ENCODE measurements at regions of chr12 and their contacts with region 1.

Region 1: DNA sequence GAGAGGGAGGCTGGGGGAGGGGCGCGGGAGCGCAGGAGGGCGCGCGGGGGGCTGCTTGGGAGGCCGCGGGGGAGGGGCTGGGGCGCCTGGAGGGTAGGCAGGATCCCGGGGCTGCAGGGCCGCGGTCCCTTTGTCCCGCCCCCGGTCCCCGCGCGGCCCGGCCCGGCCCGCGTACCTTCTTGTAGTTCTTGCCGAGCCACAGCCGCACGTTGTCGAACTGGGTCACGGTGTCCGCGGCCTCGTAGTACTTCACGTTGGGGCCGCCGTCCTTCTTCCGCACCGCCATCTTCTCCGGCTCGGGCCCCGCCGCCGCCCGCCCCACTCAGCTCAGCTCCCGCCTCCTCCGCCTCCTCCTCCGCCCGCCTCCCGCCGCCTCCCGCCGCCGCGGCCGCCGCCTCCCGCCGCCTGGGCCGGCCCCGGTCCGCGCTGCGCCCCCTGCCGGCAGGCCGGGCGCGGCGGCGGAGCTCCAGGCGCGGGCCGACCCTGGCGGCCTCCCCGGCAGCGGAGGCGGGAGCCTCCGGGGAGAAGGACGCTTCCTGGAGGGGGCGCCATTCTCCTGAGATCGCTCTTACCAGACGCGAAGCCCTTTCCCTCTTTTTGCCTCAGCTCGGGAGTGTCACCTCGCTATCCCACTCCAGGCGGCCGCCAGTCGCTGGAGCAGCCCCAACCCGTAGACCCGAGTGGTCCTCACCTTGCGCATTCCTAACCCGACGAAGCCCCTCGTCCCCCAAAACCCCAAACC is at the start of gene SMARCC2:
- DNase-seq: peak; percentile 87 to 94 (median 91)
- ATAC-seq: peak; percentile 85 to 94 (median 88)
- H3K4me3 ChIP-seq: peak within 1 kb of the TSS; percentile 60 to 99 (median 84)
- H3K27ac ChIP-seq: peak within 1 kb of the TSS; percentile 73 to 98 (median 91)
- H3K4me1 ChIP-seq: peaks cover 0 to 38% (median 17%) of the 10 kb centered on the region in 12 donors
- H3K27me3 ChIP-seq: no peaks in the 10 kb centered on the region
- CTCF ChIP-seq: peak; percentile 61 to 87 (median 72)
- POLR2A ChIP-seq: peak in 1 of 2 donors; percentile 30
- total RNA-seq, gene SMARCC2: 48.6 to 83.5 (median 66.2) TPM

Region 2: GRCh38 chr12:56041552-56042429 is 147.6 kb before region 1 on chr12 and contains the start of gene RPS26:
- intact Hi-C with region 1: loop called in 1 of 10 experiments (anchors 10 kb)
- DNase-seq: peak; percentile 95 to 99 (median 97)
- ATAC-seq: peak; percentile 96 to 98 (median 97)
- H3K4me3 ChIP-seq: peak within 1 kb of the TSS; percentile 66 to 97 (median 83)
- H3K27ac ChIP-seq: peak within 1 kb of the TSS; percentile 89 to 99 (median 96)
- H3K4me1 ChIP-seq: peaks cover 3 to 23% (median 17%) of the 10 kb centered on the region in 12 donors
- H3K27me3 ChIP-seq: no peaks in the 10 kb centered on the region
- CTCF ChIP-seq: peak; percentile 22 to 65 (median 50)
- POLR2A ChIP-seq: peak in 1 of 2 donors; percentile 52
- total RNA-seq, gene RPS26: 11.7 to 616 (median 23.2) TPM

Region 3: GRCh38 chr12:56127888-56128669 is 61.3 kb before region 1 on chr12 and contains the start of gene ESYT1:
- intact Hi-C with region 1: loop called in 5 of 10 experiments (anchors 2 kb)
- DNase-seq: peak; percentile 97 to 99 (median 99)
- ATAC-seq: peak; percentile 95 to 98 (median 96)
- H3K4me3 ChIP-seq: peak within 1 kb of the TSS; percentile 75 to 97 (median 84)
- H3K27ac ChIP-seq: peak within 1 kb of the TSS; percentile 23 to 94 (median 90)
- H3K4me1 ChIP-seq: peaks cover 8 to 61% (median 31%) of the 10 kb centered on the region in 12 donors
- H3K27me3 ChIP-seq: no peaks in the 10 kb centered on the region
- CTCF ChIP-seq: no peak
- POLR2A ChIP-seq: peak in 1 of 2 donors; percentile 97
- total RNA-seq, gene ESYT1: 26.8 to 81.1 (median 43.4) TPM

Region 4: DNA sequence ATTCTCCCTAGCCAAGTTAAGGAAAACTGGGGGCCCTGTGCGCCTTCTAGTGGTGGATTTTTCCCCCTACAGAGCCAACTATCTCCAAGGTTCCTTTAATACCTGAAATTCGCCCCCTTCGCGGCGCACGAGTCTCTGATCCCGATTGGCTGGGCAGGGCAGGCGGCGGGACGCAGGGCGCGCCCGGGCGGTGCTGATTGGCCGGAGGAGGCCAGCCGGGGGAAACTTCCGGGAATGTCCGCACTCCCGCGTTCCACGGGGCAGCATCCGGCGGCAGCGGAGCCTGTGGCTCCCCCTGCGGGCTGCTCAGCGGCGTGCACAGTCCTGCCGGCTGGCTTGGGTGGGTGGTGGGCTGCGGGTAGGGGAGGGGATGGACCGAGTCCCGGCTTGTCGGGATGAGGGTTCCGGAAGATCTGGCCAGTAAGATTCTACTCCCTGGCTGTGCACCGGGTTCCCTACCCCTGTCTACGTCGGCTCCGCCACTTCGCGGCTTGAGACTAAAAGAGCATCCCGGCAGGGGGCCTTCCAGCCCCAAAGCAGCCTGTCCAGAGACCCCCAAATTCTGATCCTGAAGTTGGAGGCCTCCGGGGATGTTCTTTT is 34.9 kb after region 1 on chr12 and contains the start of gene NABP2:
- intact Hi-C with region 1: loop called in 8 of 10 experiments (anchors 1 to 5 kb)
- DNase-seq: peak; percentile 98 to 99 (median 99)
- ATAC-seq: peak; percentile 80 to 90 (median 85)
- H3K4me3 ChIP-seq: peak within 1 kb of the TSS; percentile 52 to 97 (median 66)
- H3K27ac ChIP-seq: peak within 1 kb of the TSS; percentile 19 to 98 (median 92)
- H3K4me1 ChIP-seq: peaks cover 8 to 46% (median 37%) of the 10 kb centered on the region in 12 donors
- H3K27me3 ChIP-seq: no peaks in the 10 kb centered on the region
- CTCF ChIP-seq: peak; percentile 66 to 98 (median 91)
- POLR2A ChIP-seq: peak in 1 of 2 donors; percentile 55
- total RNA-seq, gene NABP2: 18.0 to 27.4 (median 20.7) TPM

Region 5: DNA sequence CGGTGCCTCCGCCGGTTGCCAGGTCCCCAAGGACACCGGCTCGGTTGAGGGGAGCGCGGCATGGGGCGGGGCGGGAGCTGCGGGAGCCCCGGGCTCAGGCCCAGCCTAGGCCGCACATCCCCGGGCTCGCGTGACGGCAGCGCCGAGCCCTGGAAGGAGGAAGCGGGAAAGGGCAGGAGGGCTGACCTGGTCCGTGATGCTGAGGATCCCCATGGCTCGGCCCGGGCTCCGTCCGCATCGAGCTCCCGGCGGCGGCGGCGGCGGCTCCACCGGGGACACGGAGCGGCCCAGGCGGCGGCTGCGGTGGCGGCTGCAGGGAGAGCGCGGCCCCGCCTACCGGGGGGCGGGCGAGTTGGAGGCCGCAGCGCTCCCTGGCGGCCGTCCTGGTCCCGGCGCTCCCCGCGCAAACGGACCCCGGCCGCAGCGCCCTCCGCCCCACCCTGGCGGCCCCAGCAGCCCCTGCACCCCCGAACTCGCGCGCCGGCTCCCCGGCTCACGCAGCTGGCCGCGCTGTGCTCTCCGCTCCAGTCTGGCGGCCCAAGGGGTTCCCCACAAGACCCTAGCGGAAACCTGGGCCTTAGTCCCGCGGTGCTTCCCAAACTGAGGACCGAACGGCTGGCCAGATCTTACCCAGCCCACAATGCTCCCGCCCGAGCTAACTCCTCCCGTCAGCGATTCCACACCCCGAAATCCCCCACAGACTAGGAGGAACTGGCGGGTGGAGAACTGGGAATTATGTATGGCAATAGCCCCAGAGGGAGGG is 68.9 kb after region 1 on chr12 and contains the start of gene ANKRD52:
- intact Hi-C with region 1: loop called in 4 of 10 experiments (anchors 2 kb)
- DNase-seq: peak; percentile 76 to 90 (median 83)
- ATAC-seq: peak; percentile 65 to 97 (median 93)
- H3K4me3 ChIP-seq: peak within 1 kb of the TSS; percentile 60 to 99 (median 96)
- H3K27ac ChIP-seq: peak within 1 kb of the TSS; percentile 51 to 97 (median 90)
- H3K4me1 ChIP-seq: peaks cover 5 to 29% (median 23%) of the 10 kb centered on the region in 12 donors
- H3K27me3 ChIP-seq: no peaks in the 10 kb centered on the region
- CTCF ChIP-seq: peak in 11 of 12 donors; percentile 43 to 94 (median 83)
- POLR2A ChIP-seq: peak in 1 of 2 donors; percentile 35
- total RNA-seq, gene ANKRD52: 19.3 to 40.6 (median 28.0) TPM

Region 6: GRCh38 chr12:56461235-56462159 is 272.1 kb after region 1 on chr12:
- intact Hi-C with region 1: loop called in 8 of 10 experiments (anchors 1 to 10 kb)
- DNase-seq: no peak
- ATAC-seq: no peak
- H3K4me3 ChIP-seq: no peak overlapping the region
- H3K27ac ChIP-seq: no peak overlapping the region
- H3K4me1 ChIP-seq: peaks cover 0 to 7% (median 0%) of the 10 kb centered on the region in 12 donors
- H3K27me3 ChIP-seq: no peaks in the 10 kb centered on the region
- CTCF ChIP-seq: no peak
- POLR2A ChIP-seq: no peak

Measured in heart left ventricle (tissue), 16 donors.